PC-9 (cell line): ENCODE measurements at regions of chr17 and their contacts with region 1.

Region 1: GRCh38 chr17:13477180-13477611 is 124.5 kb downstream of the HS3ST3A1 start:
- DNase-seq: no peak
- H3K4me3 ChIP-seq: no peak overlapping the region
- H3K27ac ChIP-seq: no peak overlapping the region
- H3K4me1 ChIP-seq: no peaks in the 10 kb centered on the region
- H3K27me3 ChIP-seq: no peaks in the 10 kb centered on the region
- CTCF ChIP-seq: no peak

Region 2: GRCh38 chr17:13510062-13510461 is 32.9 kb after region 1 on chr17:
- CTCF ChIA-PET with region 1: no interaction called
- POLR2A ChIA-PET with region 1: no interaction called
- intact Hi-C with region 1: loop called (anchors 2 kb)
- DNase-seq: no peak
- H3K4me3 ChIP-seq: no peak overlapping the region
- H3K27ac ChIP-seq: no peak overlapping the region
- H3K4me1 ChIP-seq: no peaks in the 10 kb centered on the region
- H3K27me3 ChIP-seq: peaks cover 12% of the 10 kb centered on the region; the same call in 1 of the 2 replicates
- CTCF ChIP-seq: no peak

Region 3: DNA sequence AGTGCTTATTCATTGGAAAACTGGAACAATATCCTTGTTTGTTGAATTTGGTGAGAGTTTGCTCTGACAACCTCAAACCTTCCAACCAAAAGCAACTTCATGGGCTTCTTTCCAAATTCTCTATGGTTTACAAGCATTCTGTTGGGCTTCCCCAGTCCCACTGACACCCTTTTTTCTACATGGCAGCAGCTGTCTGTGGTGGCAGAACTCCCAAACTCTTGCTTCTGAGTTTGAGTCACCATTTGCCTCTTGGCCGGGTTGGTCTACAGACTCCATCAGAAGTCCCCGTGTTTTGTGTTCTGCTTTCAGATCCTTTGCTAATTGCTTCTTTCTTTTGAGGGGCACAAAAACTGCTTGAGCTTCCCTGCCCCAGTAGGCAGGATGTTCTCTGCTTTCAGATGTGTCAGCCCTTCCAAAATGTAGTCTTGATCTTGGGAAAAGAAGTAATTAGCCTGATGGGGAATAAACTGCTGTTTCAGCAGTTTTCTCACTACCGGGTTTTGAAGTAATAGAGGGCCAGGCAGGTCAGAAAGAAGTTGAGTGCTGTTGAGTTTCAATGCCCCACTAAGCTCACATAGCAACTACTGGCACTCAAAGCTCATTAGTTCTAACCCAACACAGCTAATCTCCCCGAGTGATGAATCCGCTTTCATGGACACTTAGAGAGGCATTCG is 43.8 kb after region 1 on chr17:
- CTCF ChIA-PET with region 1: no interaction called
- POLR2A ChIA-PET with region 1: interaction called, 14 read pairs
- intact Hi-C with region 1: no loop called
- DNase-seq: no peak
- H3K4me3 ChIP-seq: no peak overlapping the region
- H3K27ac ChIP-seq: no peak overlapping the region
- H3K4me1 ChIP-seq: no peaks in the 10 kb centered on the region
- H3K27me3 ChIP-seq: no peaks in the 10 kb centered on the region
- CTCF ChIP-seq: no peak